CD4-positive, alpha-beta memory T cell (primary cell): ENCODE measurements at regions of chr1 and their contacts with region 1.

Region 1: GRCh38 chr1:209860293-209860881 is 32.6 kb downstream of the UTP25 start:
- DNase-seq: peak; percentile 56 to 71 (median 59)
- H3K4me3 ChIP-seq: no peak overlapping the region
- H3K4me3 Mint-ChIP-seq: no peak overlapping the region
- H3K27ac ChIP-seq: no peak overlapping the region
- H3K27ac Mint-ChIP-seq: no peak overlapping the region
- H3K4me1 ChIP-seq: no peaks in the 10 kb centered on the region
- H3K4me1 Mint-ChIP-seq: no peaks in the 10 kb centered on the region
- H3K27me3 ChIP-seq: no peaks in the 10 kb centered on the region
- H3K27me3 Mint-ChIP-seq: peaks cover 7 to 15% of the 10 kb centered on the region in 2 donors

Region 2: GRCh38 chr1:209989525-209989924 is 129.1 kb after region 1 on chr1:
- CTCF ChIA-PET with region 1: interaction called, 16 read pairs
- POLR2A ChIA-PET with region 1: no interaction called
- intact Hi-C with region 1: loop called (anchors 10 kb)
- DNase-seq: peak in 1 of 5 donors; percentile 1
- H3K4me3 ChIP-seq: no peak overlapping the region
- H3K4me3 Mint-ChIP-seq: no peak overlapping the region
- H3K27ac ChIP-seq: no peak overlapping the region
- H3K27ac Mint-ChIP-seq: no peak overlapping the region
- H3K4me1 ChIP-seq: no peaks in the 10 kb centered on the region
- H3K4me1 Mint-ChIP-seq: no peaks in the 10 kb centered on the region
- H3K27me3 ChIP-seq: no peaks in the 10 kb centered on the region
- H3K27me3 Mint-ChIP-seq: peaks cover 7 to 13% of the 10 kb centered on the region in 2 donors

Region 3: DNA sequence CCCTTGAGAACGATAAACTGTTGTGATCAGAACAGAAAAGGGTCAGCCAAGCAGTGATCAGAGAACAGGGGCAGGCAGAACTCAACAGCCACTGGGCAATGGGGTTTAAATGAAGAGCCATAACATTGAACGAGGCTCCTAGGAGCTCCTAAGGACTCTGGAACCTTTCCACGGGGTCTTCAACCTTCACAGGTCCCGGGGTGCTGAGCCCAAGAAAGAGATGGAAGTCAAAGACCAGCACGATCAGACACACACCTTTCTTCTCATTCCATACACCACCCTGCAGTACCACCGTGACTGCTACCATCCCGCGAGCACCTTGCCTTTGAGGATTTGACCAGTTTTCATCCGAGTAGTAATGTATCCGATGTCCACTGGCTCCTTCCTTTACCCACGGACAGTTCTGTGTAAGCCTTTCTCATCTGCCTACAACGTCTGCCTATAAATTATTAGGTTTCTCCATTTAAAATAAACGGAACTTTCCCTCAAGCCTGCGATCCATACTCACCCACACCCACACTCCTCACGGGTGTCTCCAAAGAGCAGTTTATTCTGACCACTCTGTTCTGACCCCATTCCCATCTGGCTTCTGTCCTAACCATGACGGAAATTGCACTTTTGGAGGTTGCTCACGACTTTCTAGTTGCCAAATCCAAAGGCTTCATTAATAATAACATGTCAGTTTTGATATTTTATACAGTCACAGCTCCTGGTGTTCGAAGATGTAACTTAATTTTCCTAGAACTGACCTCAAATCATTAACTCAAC is 451.5 kb after region 1 on chr1:
- CTCF ChIA-PET with region 1: interaction called, 18 read pairs
- POLR2A ChIA-PET with region 1: no interaction called
- intact Hi-C with region 1: loop called (anchors 1 kb)
- DNase-seq: no peak
- H3K4me3 ChIP-seq: no peak overlapping the region
- H3K4me3 Mint-ChIP-seq: peak overlapping the region; percentile 73 to 95 (median 92)
- H3K27ac ChIP-seq: no peak overlapping the region
- H3K27ac Mint-ChIP-seq: peak overlapping the region in 5 of 7 donors; percentile 42 to 95 (median 85)
- H3K4me1 ChIP-seq: peaks cover 4% of the 10 kb centered on the region
- H3K4me1 Mint-ChIP-seq: peaks cover 5 to 8% (median 6%) of the 10 kb centered on the region in 4 donors
- H3K27me3 ChIP-seq: no peaks in the 10 kb centered on the region
- H3K27me3 Mint-ChIP-seq: peaks cover 10 to 12% of the 10 kb centered on the region in 2 donors